Adrenal gland (tissue), 19 donors: ENCODE measurements at regions of chr1 and their contacts with region 1.

Region 1: DNA sequence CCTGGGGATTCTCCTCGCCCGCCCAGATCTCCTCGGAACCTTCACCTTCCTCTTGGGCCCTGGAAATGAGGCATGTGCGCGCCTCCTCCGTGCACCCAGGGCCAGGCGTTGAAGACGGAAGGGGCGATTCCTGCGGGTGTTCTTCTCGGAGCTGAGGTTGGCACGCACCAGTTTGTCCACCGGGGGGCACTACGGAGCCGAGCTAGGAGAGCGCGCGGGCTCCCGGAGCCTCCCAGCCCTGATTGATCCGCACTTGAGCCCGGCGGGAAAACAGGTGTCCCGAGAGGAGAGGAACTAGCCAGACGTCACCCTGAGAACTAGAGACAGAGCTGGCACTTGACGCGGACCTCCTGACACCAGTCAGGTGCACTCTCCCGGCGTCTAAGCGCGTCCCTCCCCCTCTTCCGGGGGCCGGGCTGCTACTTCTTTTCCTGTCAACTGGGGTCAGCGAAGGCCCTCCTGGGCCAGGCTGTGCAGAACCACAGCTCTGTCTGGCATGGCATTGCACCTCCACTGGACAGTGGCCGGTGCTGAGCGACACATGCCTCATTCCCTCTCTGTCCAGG is 18.3 kb upstream of the SERINC2 start:
- DNase-seq: peak; percentile 83 to 94 (median 91)
- H3K4me3 ChIP-seq: peak overlapping the region in 1 of 4 donors; percentile 25
- H3K27ac ChIP-seq: no peak overlapping the region
- H3K4me1 ChIP-seq: peaks cover 4 to 8% of the 10 kb centered on the region in 2 donors
- H3K27me3 ChIP-seq: no peaks in the 10 kb centered on the region
- CTCF ChIP-seq: peak; percentile 82 to 92 (median 88)
- POLR2A ChIP-seq: no peak

Region 2: DNA sequence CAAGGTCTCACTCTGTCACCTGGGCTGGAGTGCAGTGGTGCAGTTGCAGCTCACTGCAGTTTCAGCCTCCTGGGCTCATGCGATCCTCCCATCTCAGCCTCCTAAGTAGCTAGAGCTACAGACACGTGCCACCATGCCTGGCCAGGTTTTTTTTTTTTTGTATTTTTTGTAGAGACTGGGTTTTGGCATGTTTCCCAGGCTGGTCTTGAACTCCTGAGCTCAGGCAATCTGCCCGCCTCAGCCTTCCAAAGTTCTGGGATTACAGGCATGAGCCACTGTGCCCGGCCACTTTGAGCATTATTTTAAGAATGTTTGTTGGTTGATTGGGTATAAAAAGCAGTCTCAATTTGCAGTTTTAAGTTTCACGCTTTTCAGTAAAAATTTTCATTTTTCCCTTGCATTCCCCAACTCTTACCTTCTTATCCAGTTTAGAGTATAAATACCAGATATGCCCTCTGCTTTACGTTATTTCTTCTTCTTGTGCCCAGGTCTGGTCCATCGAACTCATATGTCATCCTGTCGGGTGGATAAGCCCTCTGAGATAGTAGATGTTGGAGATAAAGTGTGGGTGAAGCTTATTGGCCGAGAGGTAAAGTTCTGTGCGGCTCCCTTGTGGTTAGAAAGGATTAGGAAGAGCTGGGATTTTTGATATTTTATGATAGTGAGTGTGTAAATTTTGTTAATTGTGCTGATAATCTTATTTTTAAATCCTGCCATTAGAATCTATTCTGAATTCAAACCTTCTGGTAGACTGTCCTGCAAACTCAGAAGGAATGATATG is 57.8 kb before region 1 on chr1:
- intact Hi-C with region 1: no loop called
- DNase-seq: peak in 6 of 7 donors; percentile 31 to 65 (median 43)
- H3K4me3 ChIP-seq: no peak overlapping the region
- H3K27ac ChIP-seq: no peak overlapping the region
- H3K4me1 ChIP-seq: peaks cover 0 to 4% of the 10 kb centered on the region in 2 donors
- H3K27me3 ChIP-seq: no peaks in the 10 kb centered on the region
- CTCF ChIP-seq: no peak
- POLR2A ChIP-seq: no peak

Region 3: DNA sequence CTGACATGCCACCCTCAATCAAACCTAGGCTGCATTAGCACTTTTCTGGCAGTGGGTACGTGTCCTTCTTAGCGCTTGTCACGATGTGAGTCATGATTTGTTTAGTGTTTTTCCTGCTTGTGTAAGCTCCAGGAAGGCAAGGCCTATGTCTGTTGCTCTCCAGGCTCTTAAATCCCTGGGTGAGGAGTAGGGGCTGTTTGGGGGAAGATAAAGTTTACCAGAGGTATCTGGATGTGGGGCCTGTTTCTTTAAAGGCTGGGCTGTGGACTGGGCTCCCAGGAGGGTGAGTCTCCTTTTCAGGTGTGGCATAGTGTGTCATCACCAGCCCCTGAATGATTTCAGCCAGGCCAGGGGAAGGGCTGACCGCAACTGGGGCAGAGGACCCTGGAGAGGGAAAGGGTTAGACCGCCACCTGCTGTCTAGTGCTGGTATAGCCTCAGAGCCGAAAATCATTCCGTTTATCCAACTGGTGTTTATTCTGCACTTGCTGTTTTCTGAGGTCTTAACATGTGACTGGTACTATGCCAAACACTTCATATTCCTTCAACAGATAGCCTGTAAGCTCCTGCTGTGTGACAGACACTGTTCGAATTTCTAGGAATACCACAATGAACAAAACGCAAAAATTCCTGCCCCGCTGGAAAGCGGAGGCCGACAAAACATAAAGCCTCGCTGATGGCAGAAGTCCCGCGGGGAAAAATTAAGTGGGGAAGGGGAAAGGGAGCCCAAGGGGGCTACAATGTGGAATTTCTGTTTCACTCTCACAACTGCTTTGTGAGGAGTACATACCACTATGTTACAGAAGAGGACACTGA is 28.0 kb after region 1 on chr1:
- intact Hi-C with region 1: loop called in 1 of 2 experiments (anchors 2 kb)
- DNase-seq: peak; percentile 74 to 91 (median 82)
- H3K4me3 ChIP-seq: no peak overlapping the region
- H3K27ac ChIP-seq: peak overlapping the region in 4 of 5 donors; percentile 13 to 60 (median 57)
- H3K4me1 ChIP-seq: no peaks in the 10 kb centered on the region
- H3K27me3 ChIP-seq: no peaks in the 10 kb centered on the region
- CTCF ChIP-seq: peak; percentile 86 to 96 (median 94)
- POLR2A ChIP-seq: no peak